ENCODE measurements at regions of chr14 and their contacts with region 1.

Region 1: DNA sequence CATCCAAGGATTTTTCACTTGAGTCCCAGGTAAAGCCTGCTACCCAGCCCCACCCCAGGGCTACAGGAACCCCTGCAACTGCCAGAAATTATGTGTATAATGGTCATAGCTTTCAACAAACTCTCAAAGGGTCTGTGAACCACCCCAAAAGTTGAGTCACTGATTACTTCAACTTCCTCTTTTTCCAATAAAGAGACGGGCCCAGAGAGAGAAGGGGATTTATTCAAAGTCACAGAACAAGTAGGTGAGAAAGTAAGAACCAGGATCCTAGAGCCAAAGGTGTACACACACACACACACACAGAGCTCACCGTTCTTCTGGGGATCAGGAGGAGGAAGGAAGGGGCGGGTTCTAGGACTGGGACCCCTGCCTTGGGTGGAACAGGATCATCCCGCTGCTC is 4.8 kb upstream of the ITPK1 start:
- DNase-seq: no peak
- H3K4me3 ChIP-seq: no peak overlapping the region
- H3K27ac ChIP-seq: no peak overlapping the region
- H3K27me3 ChIP-seq: peaks cover 3% of the 10 kb centered on the region
- CTCF ChIP-seq: no peak

Region 2: DNA sequence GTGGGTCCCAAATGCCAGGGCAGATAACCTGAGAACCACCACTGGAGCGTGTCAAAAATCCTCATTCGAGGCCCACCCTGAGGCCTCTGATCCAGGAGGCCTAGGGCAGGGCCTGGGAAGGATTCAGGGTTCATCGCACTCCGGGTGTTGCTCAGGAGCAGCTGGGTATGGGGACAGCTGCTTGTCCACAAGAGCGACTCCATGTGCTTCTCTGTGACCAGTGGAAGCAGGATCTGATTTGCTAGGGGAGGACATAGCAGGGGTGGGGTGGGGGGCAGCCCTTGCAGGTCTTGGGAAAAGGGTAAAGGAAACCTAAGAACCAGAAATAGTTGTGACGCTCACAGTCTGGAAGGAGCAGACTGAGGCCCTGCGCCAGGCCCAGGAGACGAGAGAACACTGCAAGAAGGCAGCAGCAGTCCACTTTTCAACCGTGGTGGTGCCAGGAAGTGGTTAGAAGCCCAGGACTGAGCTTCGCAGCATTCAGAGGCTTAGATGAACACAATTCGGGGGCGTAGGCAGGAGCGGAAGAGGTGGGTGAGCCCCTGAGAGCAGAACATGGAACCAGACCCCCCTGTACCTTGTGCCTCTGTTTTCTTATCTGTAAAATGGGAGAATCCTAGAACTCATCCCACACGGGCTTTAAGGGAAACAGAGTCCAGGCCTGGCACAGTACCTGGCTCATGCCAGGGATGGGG is 38.5 kb before region 1 on chr14:
- CTCF ChIA-PET with region 1: no interaction called
- POLR2A ChIA-PET with region 1: no interaction called
- DNase-seq: no peak
- H3K4me3 ChIP-seq: no peak overlapping the region
- H3K27ac ChIP-seq: no peak overlapping the region
- H3K27me3 ChIP-seq: no peaks in the 10 kb centered on the region
- CTCF ChIP-seq: no peak

Region 3: DNA sequence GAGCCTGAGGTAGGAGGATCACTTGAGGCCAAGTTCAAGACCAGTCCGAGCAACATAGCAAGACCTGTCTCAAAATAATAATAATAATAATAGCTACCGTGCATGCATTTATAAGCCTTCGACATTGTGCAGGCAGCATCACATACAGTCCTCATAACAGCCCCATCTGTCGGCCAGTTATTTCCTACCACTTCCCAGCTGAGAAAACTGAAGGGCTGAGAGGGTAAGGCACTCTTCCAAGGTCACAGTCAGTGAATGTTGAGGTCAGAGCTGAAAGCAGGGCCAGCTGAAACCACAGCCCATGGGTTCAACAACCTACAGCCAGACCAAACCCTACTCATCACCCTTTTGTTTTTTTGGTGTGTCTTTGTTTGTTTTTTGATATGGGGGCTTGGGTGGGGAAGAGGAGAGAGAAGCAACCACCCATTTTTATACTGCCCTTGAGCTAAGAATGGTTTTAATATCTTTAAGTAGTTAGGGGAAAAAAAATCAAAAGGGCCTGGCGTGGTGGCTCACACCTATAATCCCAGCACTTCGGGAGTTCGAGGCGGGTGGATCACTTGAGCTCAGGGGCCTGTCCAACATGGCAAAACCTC is 12.1 kb after region 1 on chr14:
- CTCF ChIA-PET with region 1: interaction called, 84 read pairs
- POLR2A ChIA-PET with region 1: no interaction called
- DNase-seq: no peak
- H3K4me3 ChIP-seq: no peak overlapping the region
- H3K27ac ChIP-seq: no peak overlapping the region
- H3K27me3 ChIP-seq: peaks cover 12% of the 10 kb centered on the region
- CTCF ChIP-seq: peak; percentile 55

Measured in AG04450 (cell line).